Naive thymus-derived CD4-positive, alpha-beta T cell (primary cell): ENCODE measurements at regions of chr16 and their contacts with region 1.

Region 1: DNA sequence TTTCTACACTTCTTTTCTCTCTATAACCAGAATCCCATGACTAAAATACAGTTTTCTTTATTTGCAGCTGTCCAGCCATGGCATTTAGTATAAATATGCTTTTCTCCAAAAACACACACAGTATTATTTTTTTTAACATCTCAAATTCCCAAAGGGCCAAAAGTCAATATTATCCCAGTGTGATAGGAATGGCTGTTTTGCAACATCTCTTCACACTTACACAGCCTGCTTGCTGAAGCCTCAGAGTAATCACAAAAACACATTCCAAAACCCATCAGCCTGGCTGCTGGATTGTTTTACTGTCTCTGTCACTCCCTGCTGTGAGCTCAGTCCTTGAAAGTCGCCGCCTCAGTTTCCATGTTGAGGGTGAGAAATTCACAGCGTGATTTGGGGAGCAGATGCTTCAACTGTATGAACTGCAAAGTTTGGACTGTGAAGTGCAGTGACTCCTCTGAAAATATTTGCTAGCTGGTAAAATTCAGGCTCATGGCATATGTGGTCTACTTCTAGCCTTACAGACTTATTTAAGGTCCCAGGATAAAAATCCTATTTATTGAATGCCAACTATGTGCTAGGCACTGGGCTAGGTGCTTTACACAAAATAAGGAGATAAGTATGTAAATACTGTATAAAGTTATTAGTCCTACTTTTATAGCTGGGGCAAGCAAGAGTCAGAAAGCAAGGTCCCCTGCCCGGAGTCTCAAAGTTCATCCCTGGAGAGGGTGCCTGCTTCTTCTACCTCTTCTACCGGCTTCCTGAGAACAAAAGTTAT is 116.5 kb downstream of the SOCS1 start:
- DNase-seq: no peak
- ATAC-seq: no peak
- H3K4me3 ChIP-seq: peak overlapping the region; percentile 11
- H3K4me3 Mint-ChIP-seq: peak overlapping the region; percentile 58 to 87 (median 84)
- H3K27ac ChIP-seq: no peak overlapping the region
- H3K27ac Mint-ChIP-seq: peak overlapping the region; percentile 18 to 87 (median 77)
- H3K4me1 ChIP-seq: peaks cover 0 to 37% of the 10 kb centered on the region in 2 donors
- H3K4me1 Mint-ChIP-seq: peaks cover 25 to 68% (median 58%) of the 10 kb centered on the region in 7 donors
- H3K27me3 ChIP-seq: no peaks in the 10 kb centered on the region
- H3K27me3 Mint-ChIP-seq: no peaks in the 10 kb centered on the region

Region 2: GRCh38 chr16:11114366-11115164 is 24.9 kb before region 1 on chr16:
- CTCF ChIA-PET with region 1: no interaction called
- POLR2A ChIA-PET with region 1: no interaction called
- intact Hi-C with region 1: loop called in 1 of 2 experiments (anchors 1 kb)
- DNase-seq: peak in 7 of 9 donors; percentile 14 to 43 (median 31)
- ATAC-seq: peak; percentile 77
- H3K4me3 ChIP-seq: peak overlapping the region; percentile 31
- H3K4me3 Mint-ChIP-seq: peak overlapping the region; percentile 51 to 83 (median 64)
- H3K27ac ChIP-seq: no peak overlapping the region
- H3K27ac Mint-ChIP-seq: peak overlapping the region; percentile 36 to 89 (median 65)
- H3K4me1 ChIP-seq: peaks cover 17 to 26% of the 10 kb centered on the region in 2 donors
- H3K4me1 Mint-ChIP-seq: peaks cover 22 to 53% (median 33%) of the 10 kb centered on the region in 7 donors
- H3K27me3 ChIP-seq: no peaks in the 10 kb centered on the region
- H3K27me3 Mint-ChIP-seq: no peaks in the 10 kb centered on the region

Region 3: GRCh38 chr16:11407047-11407982 is 267.8 kb after region 1 on chr16:
- CTCF ChIA-PET with region 1: no interaction called
- POLR2A ChIA-PET with region 1: no interaction called
- intact Hi-C with region 1: no loop called
- DNase-seq: peak; percentile 44 to 78 (median 66)
- ATAC-seq: peak; percentile 85
- H3K4me3 ChIP-seq: no peak overlapping the region
- H3K4me3 Mint-ChIP-seq: no peak overlapping the region
- H3K27ac ChIP-seq: no peak overlapping the region
- H3K27ac Mint-ChIP-seq: peak overlapping the region in 2 of 9 donors; percentile 16 to 72
- H3K4me1 ChIP-seq: no peaks in the 10 kb centered on the region
- H3K4me1 Mint-ChIP-seq: peaks cover 0 to 5% (median 4%) of the 10 kb centered on the region in 7 donors
- H3K27me3 ChIP-seq: no peaks in the 10 kb centered on the region
- H3K27me3 Mint-ChIP-seq: no peaks in the 10 kb centered on the region